ENCODE measurements at regions of chr21 and their contacts with region 1.

Region 1: DNA sequence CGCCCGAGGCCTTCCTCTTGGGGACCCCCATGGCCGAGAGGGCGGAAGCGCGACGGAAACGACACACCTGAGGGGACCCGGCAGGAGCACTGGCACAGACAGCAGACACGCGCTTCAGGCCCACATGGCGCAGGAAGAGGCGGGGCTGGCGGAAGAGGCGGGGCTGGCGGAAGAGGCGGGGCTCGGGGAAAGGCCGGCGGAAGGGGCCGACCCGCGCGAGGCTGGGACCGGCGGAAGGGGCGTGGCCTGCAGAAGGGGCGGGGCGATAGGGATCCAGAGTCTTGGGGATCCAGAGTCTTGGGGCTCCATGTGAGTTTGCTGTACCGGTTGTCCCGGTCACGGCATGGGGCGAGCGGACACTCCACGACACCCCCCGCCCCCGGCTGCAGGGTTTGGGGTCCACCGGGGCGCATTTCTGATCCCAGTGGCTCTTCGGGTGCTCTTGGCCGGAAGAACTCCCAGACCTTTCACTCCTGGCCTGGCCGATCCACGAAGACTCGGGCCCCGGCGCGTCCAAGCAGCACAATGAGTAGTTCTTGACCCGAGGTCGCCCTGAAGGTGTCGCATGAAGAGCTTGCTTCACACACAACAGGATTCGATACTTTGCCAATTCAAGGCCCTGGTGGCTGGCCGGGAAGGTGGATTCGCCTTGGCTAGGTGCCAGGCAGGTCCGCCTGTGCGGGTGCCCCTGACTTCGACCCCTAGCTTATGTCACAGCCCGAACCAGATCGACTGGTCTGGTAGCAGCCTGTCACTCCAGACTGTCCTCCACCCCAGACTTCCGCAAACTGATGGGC is at the start of gene URB1:
- DNase-seq: peak; percentile 97
- ATAC-seq: peak; percentile 95
- H3K4me3 Mint-ChIP-seq: peak within 1 kb of the TSS; percentile 89
- H3K27ac Mint-ChIP-seq: peak within 1 kb of the TSS; percentile 88
- H3K4me1 Mint-ChIP-seq: peaks cover 43% of the 10 kb centered on the region
- H3K27me3 Mint-ChIP-seq: peaks cover 2% of the 10 kb centered on the region
- total RNA-seq, gene URB1: 24.6 to 28.5 TPM

Region 2: GRCh38 chr21:31558962-31559367 is 834.1 kb before region 1 on chr21:
- CTCF ChIA-PET with region 1: no interaction called
- POLR2A ChIA-PET with region 1: no interaction called
- intact Hi-C with region 1: loop called in 1 of 2 experiments (anchors 2 kb)
- DNase-seq: peak; percentile 97
- ATAC-seq: peak; percentile 88
- H3K4me3 Mint-ChIP-seq: peak overlapping the region; percentile 80
- H3K27ac Mint-ChIP-seq: no peak overlapping the region
- H3K4me1 Mint-ChIP-seq: peaks cover 34% of the 10 kb centered on the region
- H3K27me3 Mint-ChIP-seq: peaks cover 24% of the 10 kb centered on the region

Region 3: DNA sequence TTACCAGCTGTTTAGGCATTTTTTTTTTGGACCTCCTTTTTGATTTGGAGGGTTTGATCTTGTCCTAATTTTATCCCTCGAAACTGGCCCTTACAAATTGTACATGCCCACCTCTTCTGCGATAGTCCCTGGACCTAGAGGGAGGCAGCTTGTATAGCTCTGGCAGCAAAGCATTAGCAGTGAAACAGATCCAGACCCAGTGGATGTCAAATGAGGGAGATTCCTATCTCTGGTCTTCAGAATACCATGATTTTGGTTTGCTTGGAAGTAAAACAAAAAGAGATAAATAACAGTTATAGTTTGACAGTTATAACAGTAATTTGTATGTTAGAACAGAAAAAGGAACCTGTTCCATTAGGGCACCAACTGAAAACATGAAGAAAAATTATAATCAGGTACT is 237.9 kb before region 1 on chr21:
- CTCF ChIA-PET with region 1: no interaction called
- POLR2A ChIA-PET with region 1: no interaction called
- intact Hi-C with region 1: no loop called
- DNase-seq: no peak
- ATAC-seq: no peak
- H3K4me3 Mint-ChIP-seq: no peak overlapping the region
- H3K27ac Mint-ChIP-seq: no peak overlapping the region
- H3K4me1 Mint-ChIP-seq: no peaks in the 10 kb centered on the region
- H3K27me3 Mint-ChIP-seq: peaks cover 5% of the 10 kb centered on the region

Region 4: DNA sequence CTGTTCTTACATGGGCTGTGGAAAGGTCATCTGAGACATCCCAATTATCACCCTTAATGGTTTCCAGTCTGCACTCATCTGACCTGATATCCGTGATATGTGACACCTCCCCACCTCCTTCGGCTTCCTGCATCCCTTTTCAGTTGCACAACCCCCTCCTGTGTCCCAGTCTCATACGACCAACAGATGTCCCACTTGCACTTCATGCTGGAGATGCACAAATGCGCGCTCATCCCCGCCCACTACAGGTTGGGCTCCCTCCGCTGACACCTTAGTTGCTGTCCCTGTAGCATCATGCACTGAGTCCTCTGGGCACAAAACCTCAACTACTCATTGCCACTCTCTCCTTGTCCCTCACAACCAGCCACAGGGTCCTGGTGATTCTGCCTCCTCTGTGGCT is 208.6 kb before region 1 on chr21:
- CTCF ChIA-PET with region 1: no interaction called
- POLR2A ChIA-PET with region 1: no interaction called
- intact Hi-C with region 1: no loop called
- DNase-seq: no peak
- ATAC-seq: no peak
- H3K4me3 Mint-ChIP-seq: no peak overlapping the region
- H3K27ac Mint-ChIP-seq: no peak overlapping the region
- H3K4me1 Mint-ChIP-seq: no peaks in the 10 kb centered on the region
- H3K27me3 Mint-ChIP-seq: peaks cover 5% of the 10 kb centered on the region

Region 5: GRCh38 chr21:32382108-32382644 is 10.9 kb before region 1 on chr21:
- CTCF ChIA-PET with region 1: no interaction called
- POLR2A ChIA-PET with region 1: no interaction called
- intact Hi-C with region 1: no loop called
- DNase-seq: no peak
- ATAC-seq: no peak
- H3K4me3 Mint-ChIP-seq: no peak overlapping the region
- H3K27ac Mint-ChIP-seq: no peak overlapping the region
- H3K4me1 Mint-ChIP-seq: peaks cover 17% of the 10 kb centered on the region
- H3K27me3 Mint-ChIP-seq: no peaks in the 10 kb centered on the region

Region 6: GRCh38 chr21:32403201-32403777 is 10.2 kb after region 1 on chr21:
- CTCF ChIA-PET with region 1: interaction called, 11 read pairs
- POLR2A ChIA-PET with region 1: no interaction called
- intact Hi-C with region 1: no loop called
- DNase-seq: peak; percentile 77
- ATAC-seq: peak; percentile 92
- H3K4me3 Mint-ChIP-seq: no peak overlapping the region
- H3K27ac Mint-ChIP-seq: no peak overlapping the region
- H3K4me1 Mint-ChIP-seq: peaks cover 7% of the 10 kb centered on the region
- H3K27me3 Mint-ChIP-seq: no peaks in the 10 kb centered on the region

Region 7: DNA sequence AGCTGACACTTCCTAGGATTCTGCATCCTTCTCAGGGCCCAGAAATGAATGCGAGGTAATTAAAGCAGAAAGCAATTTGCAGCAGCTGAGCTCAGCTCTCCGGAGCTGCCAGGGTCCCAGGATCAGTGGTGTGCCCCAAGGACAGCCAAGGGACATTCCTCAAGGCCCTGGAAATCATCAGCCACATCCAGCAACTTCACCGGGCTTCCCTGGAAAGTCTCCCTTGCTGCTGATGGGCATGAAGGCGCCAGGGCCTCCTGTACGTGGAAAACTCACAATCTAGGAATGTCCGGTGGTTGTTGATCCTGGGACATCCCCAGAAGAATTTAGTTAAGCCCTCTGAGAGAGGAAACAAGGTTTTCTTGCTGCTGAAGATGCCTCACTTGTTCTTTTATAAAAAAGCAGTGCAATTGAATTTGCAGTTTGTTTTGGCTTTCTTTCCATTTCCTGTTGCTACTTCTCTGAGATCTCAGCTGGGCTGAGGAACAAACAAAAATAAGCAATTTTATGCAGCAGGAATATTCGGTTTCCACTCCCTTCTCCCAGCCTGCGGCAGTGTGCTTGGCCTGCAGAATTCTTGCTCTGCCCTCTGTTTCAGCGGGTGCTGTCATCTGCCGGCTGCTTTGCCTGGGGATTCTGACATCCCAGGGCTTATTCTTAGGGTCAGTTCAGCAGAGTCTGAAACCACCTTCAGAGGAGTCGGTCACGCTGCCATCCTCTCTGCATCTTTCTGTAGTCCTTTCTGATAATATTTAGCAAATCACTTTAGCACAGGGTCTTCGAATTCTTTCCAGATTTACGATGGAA is 106.4 kb after region 1 on chr21:
- CTCF ChIA-PET with region 1: no interaction called
- POLR2A ChIA-PET with region 1: no interaction called
- intact Hi-C with region 1: no loop called
- DNase-seq: no peak
- ATAC-seq: no peak
- H3K4me3 Mint-ChIP-seq: no peak overlapping the region
- H3K27ac Mint-ChIP-seq: no peak overlapping the region
- H3K4me1 Mint-ChIP-seq: peaks cover 17% of the 10 kb centered on the region
- H3K27me3 Mint-ChIP-seq: no peaks in the 10 kb centered on the region

Region 8: GRCh38 chr21:32569261-32570230 is 176.5 kb after region 1 on chr21:
- CTCF ChIA-PET with region 1: interaction called, 5 read pairs
- POLR2A ChIA-PET with region 1: no interaction called
- intact Hi-C with region 1: loop called in 1 of 2 experiments (anchors 2 kb)
- DNase-seq: peak; percentile 91
- ATAC-seq: peak; percentile 96
- H3K4me3 Mint-ChIP-seq: peak overlapping the region; percentile 78
- H3K27ac Mint-ChIP-seq: peak overlapping the region; percentile 81
- H3K4me1 Mint-ChIP-seq: peaks cover 13% of the 10 kb centered on the region
- H3K27me3 Mint-ChIP-seq: no peaks in the 10 kb centered on the region

Region 9: GRCh38 chr21:32612075-32612998 is 219.3 kb after region 1 on chr21 and contains the start of gene CFAP298:
- CTCF ChIA-PET with region 1: interaction called, 4 read pairs
- POLR2A ChIA-PET with region 1: no interaction called
- intact Hi-C with region 1: loop called (anchors 1 kb)
- DNase-seq: peak; percentile 92
- ATAC-seq: peak; percentile 90
- H3K4me3 Mint-ChIP-seq: peak within 1 kb of the TSS; percentile 96
- H3K27ac Mint-ChIP-seq: peak within 1 kb of the TSS; percentile 90
- H3K4me1 Mint-ChIP-seq: peaks cover 9% of the 10 kb centered on the region
- H3K27me3 Mint-ChIP-seq: no peaks in the 10 kb centered on the region
- total RNA-seq, gene CFAP298: 39.5 to 47.9 TPM

Region 10: GRCh38 chr21:33324291-33325221 is 931.5 kb after region 1 on chr21 and contains the start of gene IFNAR1:
- CTCF ChIA-PET with region 1: no interaction called
- POLR2A ChIA-PET with region 1: interaction called, 20 read pairs
- intact Hi-C with region 1: no loop called
- DNase-seq: peak; percentile 100
- ATAC-seq: peak; percentile 95
- H3K4me3 Mint-ChIP-seq: no peak within 1 kb of the TSS
- H3K27ac Mint-ChIP-seq: no peak within 1 kb of the TSS
- H3K4me1 Mint-ChIP-seq: peaks cover 31% of the 10 kb centered on the region
- H3K27me3 Mint-ChIP-seq: no peaks in the 10 kb centered on the region
- total RNA-seq, gene IFNAR1: 21.8 to 29.6 TPM

Region 11: GRCh38 chr21:33641336-33642026 is 1248.4 kb after region 1 on chr21 and contains the start of gene CRYZL1:
- CTCF ChIA-PET with region 1: no interaction called
- POLR2A ChIA-PET with region 1: no interaction called
- intact Hi-C with region 1: loop called in 1 of 2 experiments (anchors 1 kb)
- DNase-seq: peak; percentile 100
- ATAC-seq: peak; percentile 83
- H3K4me3 Mint-ChIP-seq: peak within 1 kb of the TSS; percentile 82
- H3K27ac Mint-ChIP-seq: peak within 1 kb of the TSS; percentile 96
- H3K4me1 Mint-ChIP-seq: peaks cover 33% of the 10 kb centered on the region
- H3K27me3 Mint-ChIP-seq: peaks cover 10% of the 10 kb centered on the region
- total RNA-seq, gene CRYZL1: 31.4 to 35.2 TPM